Common myeloid progenitor, CD34-positive (primary cell): ENCODE measurements at regions of chr7 and their contacts with region 1.

Region 1: DNA sequence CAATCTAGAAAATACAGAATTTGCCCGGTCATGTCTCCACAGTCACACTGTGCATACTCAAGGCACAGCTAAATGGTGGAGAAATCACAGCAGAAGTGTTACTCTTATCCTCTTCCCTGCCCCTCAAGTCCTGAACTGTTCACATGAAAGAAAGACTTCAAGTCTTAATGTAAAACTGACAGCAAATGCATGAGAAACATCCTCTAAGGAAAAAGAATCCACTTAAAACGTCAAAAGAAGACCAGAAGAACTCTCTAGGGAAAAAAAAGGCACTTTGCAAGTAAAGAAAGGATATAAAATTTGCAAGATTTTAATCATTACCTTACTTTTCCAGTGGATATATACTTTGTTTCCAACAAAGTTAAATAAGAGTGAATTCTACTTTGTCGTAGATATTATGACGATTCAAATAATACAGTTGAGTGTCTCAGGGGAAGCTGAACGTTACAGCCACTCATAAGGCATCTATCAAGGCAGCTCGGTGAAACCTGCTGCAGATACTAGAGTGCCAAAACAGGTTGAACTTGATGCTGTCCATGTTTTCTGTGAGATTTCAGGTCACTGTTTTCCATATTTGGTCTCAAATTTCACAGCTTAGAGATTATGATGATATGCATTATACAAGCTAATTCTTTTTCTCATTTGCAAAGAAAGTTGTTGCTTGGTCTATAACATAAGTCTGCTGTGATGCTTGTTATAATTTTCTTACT is 155.0 kb downstream of the CTTNBP2 start:
- DNase-seq: no peak
- H3K4me3 ChIP-seq: no peak overlapping the region
- H3K27ac ChIP-seq: no peak overlapping the region
- H3K4me1 ChIP-seq: no peaks in the 10 kb centered on the region
- H3K27me3 ChIP-seq: peaks cover 0 to 3% (median 0%) of the 10 kb centered on the region in 5 experiments

Region 2: GRCh38 chr7:117731455-117731854 is 13.2 kb after region 1 on chr7:
- CTCF ChIA-PET with region 1: interaction called, 10 read pairs
- POLR2A ChIA-PET with region 1: interaction called, 3 read pairs
- DNase-seq: peak; percentile 67 to 89 (median 86)
- H3K4me3 ChIP-seq: peak overlapping the region in 1 of 7 experiments; percentile 12
- H3K27ac ChIP-seq: peak overlapping the region; percentile 51 to 63
- H3K4me1 ChIP-seq: peaks cover 2 to 27% (median 8%) of the 10 kb centered on the region in 4 experiments
- H3K27me3 ChIP-seq: no peaks in the 10 kb centered on the region

Region 3: GRCh38 chr7:117751775-117752174 is 33.5 kb after region 1 on chr7:
- CTCF ChIA-PET with region 1: no interaction called
- POLR2A ChIA-PET with region 1: no interaction called
- DNase-seq: no peak
- H3K4me3 ChIP-seq: no peak overlapping the region
- H3K27ac ChIP-seq: no peak overlapping the region
- H3K4me1 ChIP-seq: no peaks in the 10 kb centered on the region
- H3K27me3 ChIP-seq: no peaks in the 10 kb centered on the region